ENCODE measurements at regions of chr1 and their contacts with region 1.

Region 1: DNA sequence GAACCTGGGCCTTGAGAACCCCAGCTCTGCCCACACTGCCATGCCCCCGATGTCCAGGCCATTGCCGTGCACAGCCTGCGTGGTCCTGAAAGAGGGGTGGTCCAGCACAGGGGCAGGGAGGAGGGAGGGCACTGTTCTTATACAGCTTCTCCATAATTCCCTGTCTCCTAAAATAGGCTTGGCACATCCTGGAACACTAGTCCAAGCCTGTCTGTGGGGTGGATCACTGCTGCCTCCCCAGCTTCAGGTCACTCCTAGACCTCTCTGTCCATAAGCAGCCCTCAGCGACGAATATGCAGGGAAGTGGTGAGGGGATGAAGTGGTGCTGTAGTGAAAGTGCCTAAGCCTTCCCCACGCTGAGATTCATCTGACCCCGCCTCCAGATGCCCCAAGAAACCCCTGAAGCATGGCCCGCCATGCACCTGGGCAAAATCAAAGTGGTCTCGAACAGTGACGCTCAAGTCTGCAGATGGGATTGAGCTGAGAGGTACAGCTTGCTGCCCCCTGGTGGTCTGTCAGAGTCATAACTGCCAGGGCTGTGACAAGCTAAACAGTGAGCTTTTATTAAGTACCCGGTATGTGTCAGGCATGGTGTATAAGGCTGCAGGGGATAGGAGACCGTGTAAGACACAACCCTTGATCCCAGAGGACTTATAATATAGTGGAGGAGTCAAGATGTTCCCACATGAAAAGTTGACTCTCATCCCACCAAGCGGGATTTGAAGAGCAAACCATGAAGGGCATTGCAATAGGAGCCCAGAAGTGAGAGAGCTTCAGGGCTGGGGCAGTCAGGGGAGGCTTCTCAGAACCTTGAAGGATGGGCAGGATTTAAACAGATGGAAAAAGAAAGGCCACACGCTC is 66.6 kb downstream of the FAM163A start:
- DNase-seq: peak; percentile 76
- ATAC-seq: peak; percentile 83
- H3K4me3 Mint-ChIP-seq: no peak overlapping the region
- H3K27ac Mint-ChIP-seq: no peak overlapping the region
- H3K4me1 Mint-ChIP-seq: peaks cover 4% of the 10 kb centered on the region
- H3K27me3 Mint-ChIP-seq: peaks cover 2% of the 10 kb centered on the region
- CTCF ChIP-seq: peak; percentile 87

Region 2: DNA sequence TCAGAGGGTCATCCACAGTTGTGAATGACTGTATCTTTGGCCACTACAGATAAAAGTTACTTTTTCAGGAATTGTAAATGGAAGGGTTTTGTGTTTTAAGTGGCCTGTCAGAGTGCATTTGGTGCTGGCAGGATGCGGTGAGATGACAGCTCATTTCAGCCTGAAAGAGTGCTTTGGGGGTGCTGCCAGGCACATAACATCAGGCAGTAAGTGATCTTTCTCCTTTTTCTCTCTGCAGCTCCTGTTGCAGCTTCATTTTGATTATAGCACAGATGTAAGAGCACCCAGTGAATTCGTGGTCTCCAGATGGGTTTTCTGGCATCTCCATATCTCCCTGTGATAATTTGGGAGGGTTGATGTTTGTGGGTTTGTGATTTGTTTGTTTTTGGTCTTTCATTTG is 81.5 kb before region 1 on chr1:
- CTCF ChIA-PET with region 1: interaction called, 21 read pairs
- POLR2A ChIA-PET with region 1: no interaction called
- intact Hi-C with region 1: no loop called
- DNase-seq: no peak
- ATAC-seq: no peak
- H3K4me3 Mint-ChIP-seq: no peak overlapping the region
- H3K27ac Mint-ChIP-seq: no peak overlapping the region
- H3K4me1 Mint-ChIP-seq: no peaks in the 10 kb centered on the region
- H3K27me3 Mint-ChIP-seq: peaks cover 9% of the 10 kb centered on the region
- CTCF ChIP-seq: no peak

Region 3: GRCh38 chr1:179761296-179761695 is 48.4 kb before region 1 on chr1:
- CTCF ChIA-PET with region 1: interaction called, 12 read pairs
- POLR2A ChIA-PET with region 1: no interaction called
- intact Hi-C with region 1: no loop called
- DNase-seq: no peak
- ATAC-seq: no peak
- H3K4me3 Mint-ChIP-seq: no peak overlapping the region
- H3K27ac Mint-ChIP-seq: no peak overlapping the region
- H3K4me1 Mint-ChIP-seq: no peaks in the 10 kb centered on the region
- H3K27me3 Mint-ChIP-seq: peaks cover 5% of the 10 kb centered on the region
- CTCF ChIP-seq: no peak

Region 4: GRCh38 chr1:179824265-179824664 is 14.5 kb after region 1 on chr1:
- CTCF ChIA-PET with region 1: interaction called, 32 read pairs
- POLR2A ChIA-PET with region 1: interaction called, 7 read pairs
- intact Hi-C with region 1: no loop called
- DNase-seq: no peak
- ATAC-seq: no peak
- H3K4me3 Mint-ChIP-seq: no peak overlapping the region
- H3K27ac Mint-ChIP-seq: no peak overlapping the region
- H3K4me1 Mint-ChIP-seq: no peaks in the 10 kb centered on the region
- H3K27me3 Mint-ChIP-seq: no peaks in the 10 kb centered on the region
- CTCF ChIP-seq: no peak

Region 5: GRCh38 chr1:179867807-179868330 is 58.1 kb after region 1 on chr1:
- CTCF ChIA-PET with region 1: interaction called, 15 read pairs
- POLR2A ChIA-PET with region 1: no interaction called
- intact Hi-C with region 1: no loop called
- DNase-seq: peak; percentile 72
- ATAC-seq: peak; percentile 77
- H3K4me3 Mint-ChIP-seq: no peak overlapping the region
- H3K27ac Mint-ChIP-seq: no peak overlapping the region
- H3K4me1 Mint-ChIP-seq: peaks cover 14% of the 10 kb centered on the region
- H3K27me3 Mint-ChIP-seq: no peaks in the 10 kb centered on the region
- CTCF ChIP-seq: peak; percentile 75

Measured in activated CD8-positive, alpha-beta T cell treated with anti-CD3 and anti-CD28 coated beads for 36 hours (primary cell).